Heart right ventricle (tissue), 16 donors: ENCODE measurements at regions of chr1 and their contacts with region 1.

Region 1: GRCh38 chr1:116474921-116475849 is 95.6 kb downstream of the CD58 start:
- DNase-seq: peak; percentile 51 to 63
- ATAC-seq: peak; percentile 70 to 88 (median 85)
- H3K4me3 ChIP-seq: no peak overlapping the region
- H3K27ac ChIP-seq: peak overlapping the region; percentile 38 to 94 (median 90)
- H3K4me1 ChIP-seq: peaks cover 6 to 40% (median 32%) of the 10 kb centered on the region in 9 donors
- H3K27me3 ChIP-seq: no peaks in the 10 kb centered on the region
- CTCF ChIP-seq: no peak

Region 2: DNA sequence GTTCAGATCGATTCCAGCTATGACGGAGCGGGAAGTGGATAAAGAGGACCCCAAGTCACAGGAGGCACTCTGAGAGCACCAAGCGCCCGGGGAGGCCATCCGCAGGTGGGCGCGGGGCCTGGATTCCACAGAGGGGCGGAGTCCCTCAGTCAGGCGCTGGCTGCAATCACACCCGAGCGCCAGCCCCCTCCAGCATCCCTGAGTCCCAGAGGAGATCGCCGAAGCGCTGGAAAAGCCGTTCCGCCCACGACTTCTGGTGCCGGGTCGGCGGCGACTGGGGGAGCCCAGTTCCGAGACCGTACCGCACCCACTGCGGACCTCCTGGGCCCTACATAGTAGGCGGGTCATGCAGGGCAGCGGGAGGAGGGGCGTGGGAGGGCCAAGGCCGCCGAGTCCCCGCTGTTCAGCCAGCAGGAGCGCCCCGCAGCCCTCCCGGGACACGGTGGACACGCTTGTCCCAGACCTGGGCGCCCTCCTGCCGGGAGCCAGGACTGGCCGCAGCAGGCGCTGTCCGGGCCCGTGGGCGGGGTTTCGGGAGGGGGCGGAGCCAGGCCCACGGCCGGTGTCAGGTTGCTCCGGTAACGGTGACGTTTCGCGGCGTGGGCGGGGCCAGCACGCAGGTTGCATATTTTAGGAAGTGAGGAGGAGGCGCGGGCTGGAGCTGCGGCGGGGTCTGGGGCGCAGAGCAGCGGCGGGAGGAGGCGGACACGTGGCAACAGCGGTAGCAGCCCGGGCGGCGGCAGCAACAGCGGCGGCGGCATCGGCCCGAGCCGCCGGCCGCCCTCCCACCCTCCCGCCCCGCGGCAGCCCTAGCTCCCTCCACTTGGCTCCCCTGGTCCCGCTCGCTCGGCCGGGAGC is 102.4 kb before region 1 on chr1 and contains the start of gene ATP1A1:
- intact Hi-C with region 1: loop called in 3 of 10 experiments (anchors 5 to 10 kb)
- DNase-seq: peak; percentile 97 to 99
- ATAC-seq: peak; percentile 84 to 92 (median 88)
- H3K4me3 ChIP-seq: peak within 1 kb of the TSS; percentile 66 to 90 (median 86)
- H3K27ac ChIP-seq: peak within 1 kb of the TSS; percentile 91 to 98 (median 97)
- H3K4me1 ChIP-seq: peaks cover 10 to 49% (median 43%) of the 10 kb centered on the region in 9 donors
- H3K27me3 ChIP-seq: no peaks in the 10 kb centered on the region
- CTCF ChIP-seq: peak in 5 of 9 donors; percentile 2 to 50 (median 39)
- total RNA-seq, gene ATP1A1: 153 to 403 (median 203) TPM

Region 3: DNA sequence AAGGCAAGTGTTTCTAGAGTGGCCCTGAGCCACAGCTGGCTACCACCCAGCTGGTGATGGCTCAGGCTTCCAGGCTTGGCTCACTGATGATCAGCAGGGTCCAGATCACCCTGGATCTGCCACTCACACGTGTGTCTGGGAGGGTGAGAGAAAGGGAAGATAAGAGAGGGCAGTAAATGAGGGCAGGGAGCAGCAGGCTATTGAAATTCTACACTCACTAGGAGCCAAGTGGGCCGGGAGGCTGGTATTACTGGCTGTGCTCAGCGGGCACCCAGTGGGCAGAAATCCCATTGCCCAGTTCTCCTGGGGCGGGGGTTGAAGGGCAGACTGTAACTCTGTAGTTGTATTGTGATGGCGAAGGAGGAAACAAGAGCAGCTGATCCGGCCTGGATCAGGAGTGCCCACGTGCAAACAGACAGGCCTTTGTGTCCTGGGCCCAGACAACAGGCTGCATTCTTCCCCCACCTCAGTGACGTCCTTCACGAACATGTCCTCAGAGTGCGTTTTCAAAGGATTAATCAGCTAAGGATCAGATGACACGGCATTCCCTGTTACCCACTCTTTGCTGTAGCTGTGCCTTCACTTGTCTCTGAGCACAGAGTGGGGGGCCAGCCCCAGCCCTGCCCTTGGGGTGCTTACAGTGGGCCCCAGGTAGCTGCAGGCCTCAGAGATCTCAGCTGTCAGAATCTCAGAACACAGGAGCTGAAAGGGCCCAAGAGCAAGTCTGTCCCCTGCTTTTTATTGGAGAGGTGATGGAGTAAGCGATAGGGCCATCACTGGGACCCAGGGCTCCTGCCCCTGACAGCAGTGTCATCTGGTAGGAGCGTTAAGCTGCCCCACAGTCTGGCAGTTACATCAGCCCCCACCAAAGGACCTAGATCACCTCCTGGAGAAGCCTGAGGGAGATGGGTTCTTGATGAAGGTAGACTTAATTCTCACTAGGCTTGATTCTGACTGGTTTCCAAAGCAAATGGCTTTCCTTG is 41.6 kb before region 1 on chr1:
- intact Hi-C with region 1: loop called in 5 of 10 experiments (anchors 1 to 10 kb)
- DNase-seq: peak; percentile 66 to 69
- ATAC-seq: peak; percentile 82 to 95 (median 88)
- H3K4me3 ChIP-seq: no peak overlapping the region
- H3K27ac ChIP-seq: peak overlapping the region; percentile 23 to 86 (median 74)
- H3K4me1 ChIP-seq: peaks cover 0 to 25% (median 12%) of the 10 kb centered on the region in 9 donors
- H3K27me3 ChIP-seq: no peaks in the 10 kb centered on the region
- CTCF ChIP-seq: no peak

Region 4: DNA sequence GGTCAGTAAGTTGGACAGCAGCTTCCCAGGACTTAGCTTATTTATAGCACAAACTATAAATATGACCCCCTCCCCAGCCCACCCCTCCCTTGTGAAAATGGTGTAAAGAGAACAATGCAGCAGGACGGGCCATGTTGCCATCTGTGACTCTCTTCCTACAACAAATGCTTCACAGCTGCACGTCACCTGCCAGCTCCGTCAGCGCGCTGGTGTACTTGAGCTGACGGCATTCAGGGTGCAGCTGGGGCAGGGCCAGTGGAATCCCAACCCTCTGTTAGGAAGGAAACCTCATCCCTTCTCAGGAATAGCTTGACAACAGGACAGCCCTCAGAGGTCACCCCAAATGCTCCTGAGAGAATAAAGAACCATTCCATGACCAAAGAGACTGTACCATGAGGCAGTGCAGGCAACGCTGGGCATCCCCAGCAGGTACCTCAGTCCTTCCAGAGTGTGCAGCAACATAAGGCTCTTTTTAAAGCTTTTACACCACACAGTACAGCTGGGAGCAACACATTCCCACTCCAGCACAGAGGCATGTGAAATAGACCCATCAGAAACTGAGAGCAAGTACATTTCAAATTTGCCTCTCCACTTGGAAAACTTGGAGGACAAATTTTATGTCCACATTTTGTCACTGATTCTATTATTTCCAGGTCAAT is 17.1 kb before region 1 on chr1:
- intact Hi-C with region 1: loop called in 1 of 10 experiments (anchors 2 kb)
- DNase-seq: peak in 1 of 2 donors; percentile 29
- ATAC-seq: peak in 6 of 8 donors; percentile 55 to 87 (median 77)
- H3K4me3 ChIP-seq: no peak overlapping the region
- H3K27ac ChIP-seq: peak overlapping the region in 1 of 10 donors; percentile 14
- H3K4me1 ChIP-seq: peaks cover 0 to 4% (median 0%) of the 10 kb centered on the region in 9 donors
- H3K27me3 ChIP-seq: no peaks in the 10 kb centered on the region
- CTCF ChIP-seq: no peak

Region 5: GRCh38 chr1:117967477-117967876 is 1492.3 kb after region 1 on chr1:
- intact Hi-C with region 1: no loop called
- DNase-seq: no peak
- ATAC-seq: no peak
- H3K4me3 ChIP-seq: no peak overlapping the region
- H3K27ac ChIP-seq: no peak overlapping the region
- H3K4me1 ChIP-seq: no peaks in the 10 kb centered on the region
- H3K27me3 ChIP-seq: no peaks in the 10 kb centered on the region
- CTCF ChIP-seq: peak in 1 of 9 donors; percentile 10